ENCODE measurements at regions of chr6 and their contacts with region 1.

Region 1: DNA sequence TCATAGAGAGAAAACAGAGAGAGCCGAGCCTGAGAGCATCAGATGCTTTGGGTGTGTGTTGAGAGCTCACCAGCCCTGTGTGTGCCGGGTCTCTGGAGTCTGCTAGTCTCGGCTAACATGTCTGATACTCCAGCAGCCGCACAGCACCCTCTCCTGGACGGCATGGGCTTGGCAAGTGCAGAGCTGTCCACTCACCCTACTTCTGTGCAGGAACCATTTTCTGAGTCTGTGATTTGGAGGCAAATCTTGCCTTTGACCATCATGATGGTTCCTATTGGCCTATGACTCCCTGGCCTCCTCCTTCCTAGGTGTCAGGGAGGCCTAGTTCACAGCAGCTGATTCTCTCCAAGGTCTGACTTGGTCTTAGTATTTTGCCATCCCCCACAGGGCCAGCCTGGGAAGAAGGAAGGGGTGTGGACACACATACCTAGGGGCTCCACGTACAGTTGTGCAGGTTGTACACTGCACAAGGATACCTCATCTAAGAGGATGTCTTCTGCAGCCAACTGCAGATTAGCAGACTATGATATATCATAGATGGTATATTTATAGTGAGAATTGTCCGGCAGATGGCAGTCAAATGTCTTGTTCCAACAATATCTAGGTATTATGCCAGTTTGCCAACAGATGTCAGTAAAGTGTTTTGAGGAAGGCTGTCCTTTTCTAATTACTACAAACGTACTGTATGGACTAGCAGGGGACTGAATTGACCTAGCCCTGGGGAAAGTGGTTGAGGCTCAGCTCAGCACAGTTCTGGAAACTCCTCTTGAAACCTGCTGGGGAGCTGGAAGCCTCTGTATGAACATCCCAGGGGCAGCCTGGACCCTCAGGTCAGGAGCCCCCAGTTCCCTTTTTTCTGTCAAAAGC is 13.0 kb downstream of the FGD2 start:
- DNase-seq: peak; percentile 81 to 92 (median 88)
- ATAC-seq: peak; percentile 94
- H3K4me3 ChIP-seq: no peak overlapping the region
- H3K4me3 Mint-ChIP-seq: no peak overlapping the region
- H3K27ac ChIP-seq: no peak overlapping the region
- H3K27ac Mint-ChIP-seq: peak overlapping the region; percentile 14
- H3K4me1 ChIP-seq: peaks cover 42% of the 10 kb centered on the region
- H3K4me1 Mint-ChIP-seq: peaks cover 42% of the 10 kb centered on the region
- H3K27me3 ChIP-seq: no peaks in the 10 kb centered on the region
- H3K27me3 Mint-ChIP-seq: no peaks in the 10 kb centered on the region
- CTCF ChIP-seq: peak; percentile 89

Region 2: GRCh38 chr6:36874443-36875249 is 143.8 kb before region 1 on chr6 and contains the start of gene PPIL1:
- CTCF ChIA-PET with region 1: interaction called, 26 read pairs
- POLR2A ChIA-PET with region 1: interaction called, 10 read pairs
- intact Hi-C with region 1: no loop called
- DNase-seq: peak; percentile 71 to 94 (median 82)
- ATAC-seq: peak; percentile 91
- H3K4me3 ChIP-seq: peak within 1 kb of the TSS; percentile 69
- H3K4me3 Mint-ChIP-seq: peak within 1 kb of the TSS; percentile 95
- H3K27ac ChIP-seq: peak within 1 kb of the TSS; percentile 80 to 82
- H3K27ac Mint-ChIP-seq: peak within 1 kb of the TSS; percentile 95
- H3K4me1 ChIP-seq: peaks cover 14% of the 10 kb centered on the region
- H3K4me1 Mint-ChIP-seq: peaks cover 45% of the 10 kb centered on the region
- H3K27me3 ChIP-seq: peaks cover 0 to 5% of the 10 kb centered on the region in 2 experiments
- H3K27me3 Mint-ChIP-seq: peaks cover 17% of the 10 kb centered on the region
- CTCF ChIP-seq: no peak
- total RNA-seq, gene PPIL1: 1.8 to 2.2 TPM

Region 3: DNA sequence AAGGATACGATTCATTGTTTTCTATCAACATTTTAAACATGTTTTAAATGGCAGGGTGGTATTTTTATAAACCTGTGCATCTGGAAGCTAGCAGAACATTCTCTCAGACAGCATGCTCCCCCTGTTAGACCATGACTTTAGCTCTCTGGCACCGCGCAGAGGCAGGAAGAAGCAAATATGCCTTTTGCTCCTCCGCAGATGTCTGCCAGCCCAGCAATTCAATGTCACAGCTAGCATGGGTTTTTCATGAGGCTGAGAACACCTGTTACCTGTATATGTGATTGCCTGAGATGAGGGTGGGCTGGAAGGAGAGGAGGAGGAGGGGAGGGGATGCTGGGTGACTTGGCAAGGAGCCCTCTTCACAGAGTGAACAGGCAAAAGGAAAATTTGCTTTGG is 39.1 kb before region 1 on chr6:
- CTCF ChIA-PET with region 1: interaction called, 5 read pairs
- POLR2A ChIA-PET with region 1: no interaction called
- intact Hi-C with region 1: loop called in 1 of 2 experiments (anchors 5 kb)
- DNase-seq: peak in 10 of 14 experiments; percentile 19 to 68 (median 42)
- ATAC-seq: peak; percentile 90
- H3K4me3 ChIP-seq: no peak overlapping the region
- H3K4me3 Mint-ChIP-seq: peak overlapping the region; percentile 79
- H3K27ac ChIP-seq: no peak overlapping the region
- H3K27ac Mint-ChIP-seq: peak overlapping the region; percentile 85
- H3K4me1 ChIP-seq: peaks cover 46% of the 10 kb centered on the region
- H3K4me1 Mint-ChIP-seq: peaks cover 32% of the 10 kb centered on the region
- H3K27me3 ChIP-seq: no peaks in the 10 kb centered on the region
- H3K27me3 Mint-ChIP-seq: no peaks in the 10 kb centered on the region
- CTCF ChIP-seq: peak; percentile 58

Region 4: GRCh38 chr6:37029249-37029971 is 11.0 kb after region 1 on chr6:
- CTCF ChIA-PET with region 1: interaction called, 16 read pairs
- POLR2A ChIA-PET with region 1: no interaction called
- intact Hi-C with region 1: no loop called
- DNase-seq: peak in 5 of 14 experiments; percentile 31 to 80 (median 60)
- ATAC-seq: peak; percentile 57
- H3K4me3 ChIP-seq: no peak overlapping the region
- H3K4me3 Mint-ChIP-seq: no peak overlapping the region
- H3K27ac ChIP-seq: no peak overlapping the region
- H3K27ac Mint-ChIP-seq: no peak overlapping the region
- H3K4me1 ChIP-seq: peaks cover 16% of the 10 kb centered on the region
- H3K4me1 Mint-ChIP-seq: peaks cover 5% of the 10 kb centered on the region
- H3K27me3 ChIP-seq: no peaks in the 10 kb centered on the region
- H3K27me3 Mint-ChIP-seq: no peaks in the 10 kb centered on the region
- CTCF ChIP-seq: peak; percentile 60

Region 5: DNA sequence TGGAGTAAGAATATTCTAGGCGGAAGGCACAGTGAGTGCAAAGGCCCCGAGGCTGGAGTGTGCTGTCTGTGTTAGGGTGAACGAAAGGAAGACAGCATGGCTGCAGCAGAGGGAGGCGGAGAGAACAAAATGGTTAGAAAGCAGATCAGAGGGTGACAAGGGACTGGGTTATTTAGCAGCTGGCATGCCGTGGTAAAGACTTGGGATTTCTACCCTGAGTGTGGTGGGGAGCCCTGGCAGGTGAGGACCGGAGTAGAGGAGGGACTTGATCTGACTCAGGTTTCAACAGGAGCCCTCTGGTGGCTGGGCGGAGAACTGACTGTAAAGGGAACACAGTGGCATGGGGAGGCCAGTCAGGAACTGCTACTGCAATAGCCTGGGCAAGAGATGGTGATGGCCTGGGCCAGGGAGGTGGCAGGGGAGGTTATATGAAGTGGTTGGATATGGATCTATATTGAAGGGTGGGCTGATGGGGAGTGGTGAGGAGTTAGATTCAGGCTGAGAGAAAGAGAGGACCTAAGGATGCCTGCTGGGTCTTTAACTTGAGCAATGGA is 189.5 kb after region 1 on chr6:
- CTCF ChIA-PET with region 1: interaction called, 205 read pairs
- POLR2A ChIA-PET with region 1: interaction called, 31 read pairs
- intact Hi-C with region 1: loop called (anchors 1 kb)
- DNase-seq: peak; percentile 83 to 93 (median 89)
- ATAC-seq: peak; percentile 73
- H3K4me3 ChIP-seq: no peak overlapping the region
- H3K4me3 Mint-ChIP-seq: peak overlapping the region; percentile 26
- H3K27ac ChIP-seq: no peak overlapping the region
- H3K27ac Mint-ChIP-seq: peak overlapping the region; percentile 58
- H3K4me1 ChIP-seq: peaks cover 56% of the 10 kb centered on the region
- H3K4me1 Mint-ChIP-seq: peaks cover 50% of the 10 kb centered on the region
- H3K27me3 ChIP-seq: no peaks in the 10 kb centered on the region
- H3K27me3 Mint-ChIP-seq: no peaks in the 10 kb centered on the region
- CTCF ChIP-seq: peak; percentile 86

Region 6: DNA sequence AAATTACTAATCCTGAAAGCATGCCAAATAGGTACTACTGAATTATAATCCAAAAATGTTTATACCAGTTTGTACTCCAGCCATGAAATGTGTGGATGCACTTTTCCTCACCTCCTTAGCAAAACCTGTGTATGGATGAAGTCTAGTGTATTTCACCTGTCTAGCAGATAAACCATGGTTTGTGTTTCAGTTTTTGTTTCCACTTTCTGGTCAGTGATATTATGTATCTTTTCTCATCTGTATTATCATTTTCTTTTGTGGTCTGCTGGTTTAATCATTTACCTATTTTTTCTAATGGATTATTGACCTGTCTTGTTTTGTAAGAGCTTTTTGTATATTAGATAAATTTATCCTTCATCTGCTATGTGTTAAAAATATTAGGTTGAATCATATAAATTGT is 280.5 kb after region 1 on chr6:
- CTCF ChIA-PET with region 1: no interaction called
- POLR2A ChIA-PET with region 1: no interaction called
- intact Hi-C with region 1: no loop called
- DNase-seq: no peak
- ATAC-seq: no peak
- H3K4me3 ChIP-seq: no peak overlapping the region
- H3K4me3 Mint-ChIP-seq: no peak overlapping the region
- H3K27ac ChIP-seq: no peak overlapping the region
- H3K27ac Mint-ChIP-seq: no peak overlapping the region
- H3K4me1 ChIP-seq: no peaks in the 10 kb centered on the region
- H3K4me1 Mint-ChIP-seq: no peaks in the 10 kb centered on the region
- H3K27me3 ChIP-seq: no peaks in the 10 kb centered on the region
- H3K27me3 Mint-ChIP-seq: no peaks in the 10 kb centered on the region
- CTCF ChIP-seq: no peak

Measured in CD4-positive, alpha-beta T cell (primary cell).